Right ventricle myocardium inferior (tissue), 1 donor: ENCODE measurements at regions of chr1 and their contacts with region 1.

Region 1: GRCh38 chr1:115219937-115220336 is 118.1 kb downstream of the NGF start:
- DNase-seq: peak; percentile 68
- ATAC-seq: peak; percentile 86

Region 2: DNA sequence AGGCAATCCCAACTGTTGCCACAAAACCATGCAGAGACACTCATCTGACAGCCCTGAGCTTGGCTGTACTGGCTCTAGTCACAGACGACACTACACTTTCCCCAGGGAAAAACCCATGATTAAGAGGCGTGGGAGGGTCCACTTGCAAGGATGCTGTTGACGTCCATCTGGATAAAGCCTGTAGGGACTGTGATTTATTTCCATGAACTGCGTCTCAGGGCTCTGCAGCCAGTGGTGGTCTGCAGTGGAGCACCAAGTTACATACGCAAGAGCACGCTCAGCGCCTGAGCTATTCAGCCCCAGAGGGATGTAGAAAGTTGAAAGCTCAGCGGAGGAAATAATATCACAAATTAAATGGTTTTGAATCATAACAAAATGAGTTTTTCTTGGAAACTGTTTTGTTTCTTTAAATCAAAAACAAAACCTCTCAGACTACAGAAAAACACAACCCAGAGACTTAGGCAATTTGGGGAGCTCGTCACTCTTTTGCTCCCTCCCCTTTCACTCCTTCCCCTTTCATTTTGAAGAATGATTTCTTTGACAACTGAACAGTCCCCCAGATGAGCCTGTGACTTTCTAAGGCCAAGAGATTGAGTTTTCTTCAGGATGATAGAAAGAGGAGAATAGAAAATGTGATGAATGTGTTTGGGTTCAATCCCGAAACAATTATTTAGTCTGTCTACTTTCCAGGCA is 46.9 kb after region 1 on chr1:
- intact Hi-C with region 1: loop called (anchors 5 kb)
- DNase-seq: peak; percentile 80
- ATAC-seq: peak; percentile 96